Left lung (tissue), 14 donors: ENCODE measurements at regions of chr4 and their contacts with region 1.

Region 1: DNA sequence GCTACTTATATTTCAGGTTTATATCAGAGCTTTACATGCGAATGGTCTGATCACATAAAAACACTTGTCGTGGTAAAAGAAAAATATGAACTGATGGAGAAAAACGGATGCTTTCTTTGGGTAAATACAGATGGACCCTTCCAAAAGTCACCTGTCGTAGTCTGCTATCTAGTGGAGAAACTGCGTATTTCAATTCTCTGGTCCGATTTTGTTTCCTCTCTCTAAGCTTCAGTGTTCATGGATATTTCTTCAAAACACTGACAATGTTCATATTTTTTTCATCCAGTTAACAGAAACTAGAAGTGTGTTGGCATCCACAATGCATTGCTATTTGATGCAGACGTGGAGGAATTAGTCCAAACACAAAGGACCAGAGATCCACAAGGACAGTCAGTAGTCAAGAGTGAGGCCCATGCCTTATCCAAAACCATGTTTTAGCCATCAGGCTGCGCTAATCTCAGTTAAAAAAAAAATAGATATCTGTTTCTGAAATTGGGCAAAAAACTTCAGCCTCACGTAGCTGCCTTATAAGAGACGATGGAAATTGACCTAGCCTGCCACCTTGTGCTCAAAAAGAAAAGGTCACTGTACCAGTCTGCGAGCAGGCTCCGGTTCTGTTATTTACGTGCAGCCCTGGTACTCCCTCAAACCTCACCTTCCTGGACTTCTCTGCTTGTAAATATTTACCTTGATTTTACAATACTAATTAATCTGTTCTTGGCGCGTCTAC is 16.0 kb downstream of the MEPE start:
- DNase-seq: peak in 3 of 4 donors; percentile 45 to 72 (median 52)
- ATAC-seq: peak; percentile 87
- H3K4me3 ChIP-seq: no peak overlapping the region
- H3K27ac ChIP-seq: peak overlapping the region in 1 of 2 donors; percentile 87
- H3K4me1 ChIP-seq: peaks cover 0 to 52% of the 10 kb centered on the region in 2 donors
- H3K27me3 ChIP-seq: no peaks in the 10 kb centered on the region
- CTCF ChIP-seq: peak; percentile 68 to 70

Region 2: DNA sequence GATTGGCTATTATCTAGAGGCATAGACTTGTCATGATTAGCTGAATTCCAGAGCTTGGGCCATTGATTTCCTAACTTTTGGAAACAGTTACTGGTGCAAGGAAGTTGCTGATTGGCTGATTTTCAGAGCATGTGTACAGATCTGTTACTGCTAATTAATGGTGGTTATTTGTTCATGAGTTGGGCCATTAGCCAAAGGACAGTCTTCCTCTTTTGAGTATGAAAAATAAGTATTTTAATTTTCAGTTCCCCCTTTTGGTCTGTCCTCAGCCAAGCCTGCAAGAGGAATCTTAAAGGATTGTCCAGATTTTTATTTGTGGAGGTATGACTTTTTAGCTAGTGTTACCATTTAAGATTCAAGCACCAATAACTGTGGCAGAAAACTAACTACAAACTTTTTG is 247.4 kb before region 1 on chr4:
- intact Hi-C with region 1: no loop called
- DNase-seq: no peak
- ATAC-seq: no peak
- H3K4me3 ChIP-seq: no peak overlapping the region
- H3K27ac ChIP-seq: no peak overlapping the region
- H3K4me1 ChIP-seq: no peaks in the 10 kb centered on the region
- H3K27me3 ChIP-seq: no peaks in the 10 kb centered on the region
- CTCF ChIP-seq: no peak

Region 3: DNA sequence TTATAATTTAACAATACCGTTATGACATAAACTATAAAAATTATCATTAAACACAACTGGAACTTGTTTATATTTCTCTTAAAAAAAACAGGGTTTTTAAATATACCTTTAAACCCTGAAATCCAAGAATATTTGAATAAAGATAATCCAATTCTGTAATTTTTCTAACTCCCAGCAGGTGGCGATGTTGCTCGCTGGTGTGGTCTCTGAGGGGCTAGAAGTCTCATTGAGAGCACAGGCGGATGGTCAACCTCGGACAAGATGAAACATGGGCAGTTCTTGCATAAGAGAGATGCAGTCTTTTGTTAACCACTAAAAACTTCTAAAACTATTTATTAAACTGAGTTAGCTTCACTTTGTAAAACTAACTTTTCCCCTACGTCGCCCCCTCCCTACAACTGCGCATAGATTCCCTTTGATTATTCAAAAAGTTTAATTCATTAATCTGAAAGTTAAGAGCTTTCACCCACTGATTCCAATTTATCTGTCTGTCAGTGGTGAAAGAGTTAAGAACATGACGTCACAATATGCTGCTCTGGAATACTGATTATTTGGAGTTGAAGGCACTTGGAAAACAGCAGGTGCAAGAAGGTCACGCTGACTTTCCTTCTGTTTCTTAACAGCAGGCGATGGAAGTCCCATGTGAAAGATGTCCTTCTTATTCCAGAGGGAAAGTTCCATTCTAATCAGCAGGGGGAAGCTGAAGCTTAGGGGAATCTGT is 169.2 kb before region 1 on chr4:
- intact Hi-C with region 1: loop called in 1 of 2 experiments (anchors 5 kb)
- DNase-seq: peak in 2 of 4 donors; percentile 51 to 75
- ATAC-seq: peak; percentile 77
- H3K4me3 ChIP-seq: no peak overlapping the region
- H3K27ac ChIP-seq: no peak overlapping the region
- H3K4me1 ChIP-seq: no peaks in the 10 kb centered on the region
- H3K27me3 ChIP-seq: no peaks in the 10 kb centered on the region
- CTCF ChIP-seq: peak; percentile 60 to 78

Region 4: DNA sequence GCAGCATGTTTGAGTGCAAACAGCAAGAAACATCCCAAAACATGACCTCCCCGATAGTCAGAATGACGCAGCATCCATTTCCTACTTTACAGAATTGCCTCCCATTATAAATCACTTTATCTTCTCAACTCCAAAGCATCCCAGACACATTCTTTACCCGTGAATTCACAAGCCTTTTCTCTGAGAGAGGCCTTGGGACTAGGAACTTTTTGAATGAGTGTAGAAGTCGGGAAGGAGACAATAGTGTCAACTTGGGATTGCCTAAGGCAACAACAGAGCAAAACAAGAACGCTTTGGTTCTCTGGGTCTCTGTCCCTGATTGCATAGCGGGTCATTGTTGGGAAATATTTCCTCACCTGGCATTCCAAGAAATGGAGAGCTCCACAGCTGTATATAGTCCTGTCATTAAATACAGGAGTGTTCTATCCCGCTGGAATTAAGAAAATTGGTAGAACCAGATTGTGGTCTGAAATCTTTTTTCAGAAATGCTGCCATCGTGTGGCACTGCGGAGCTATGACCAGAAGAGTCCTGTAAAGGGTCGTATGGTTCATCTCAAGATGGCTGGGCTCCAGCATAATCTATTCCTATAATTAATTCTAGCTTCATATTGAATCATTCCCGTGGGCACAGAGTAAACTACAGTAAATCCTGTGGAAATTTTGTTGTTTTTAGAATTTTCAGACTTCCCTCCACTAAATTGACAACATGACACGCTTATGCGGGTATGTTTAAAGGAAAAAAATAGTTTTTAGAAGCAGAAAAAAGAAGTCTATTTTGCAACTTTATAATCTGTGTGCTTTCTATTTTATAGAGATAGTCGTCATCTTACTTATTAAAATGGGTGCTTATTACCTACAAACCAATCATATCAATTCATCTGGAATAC is 124.7 kb after region 1 on chr4:
- intact Hi-C with region 1: loop called in 1 of 2 experiments (anchors 2 kb)
- DNase-seq: peak in 3 of 4 donors; percentile 24 to 66 (median 54)
- ATAC-seq: peak; percentile 88
- H3K4me3 ChIP-seq: no peak overlapping the region
- H3K27ac ChIP-seq: no peak overlapping the region
- H3K4me1 ChIP-seq: peaks cover 0 to 15% of the 10 kb centered on the region in 2 donors
- H3K27me3 ChIP-seq: peaks cover 0 to 31% of the 10 kb centered on the region in 2 donors
- CTCF ChIP-seq: peak; percentile 76 to 80

Region 5: GRCh38 chr4:88204882-88205281 is 356.1 kb after region 1 on chr4:
- intact Hi-C with region 1: loop called in 1 of 2 experiments (anchors 10 kb)
- DNase-seq: no peak
- ATAC-seq: peak; percentile 33
- H3K4me3 ChIP-seq: no peak overlapping the region
- H3K27ac ChIP-seq: no peak overlapping the region
- H3K4me1 ChIP-seq: no peaks in the 10 kb centered on the region
- H3K27me3 ChIP-seq: no peaks in the 10 kb centered on the region
- CTCF ChIP-seq: no peak